ENCODE measurements at regions of chr1 and their contacts with region 1.

Region 1: GRCh38 chr1:3900119-3900968 is at the start of gene C1orf174:
- DNase-seq: peak; percentile 99
- H3K4me3 ChIP-seq: peak within 1 kb of the TSS; percentile 96
- H3K27ac ChIP-seq: peak within 1 kb of the TSS; percentile 100
- H3K4me1 ChIP-seq: peaks cover 54% of the 10 kb centered on the region
- CTCF ChIP-seq: no peak
- total RNA-seq, gene C1orf174: 43.4 and 59.5 TPM in 2 replicates

Region 2: GRCh38 chr1:3668585-3669300 is 231.6 kb before region 1 on chr1:
- CTCF ChIA-PET with region 1: no interaction called
- POLR2A ChIA-PET with region 1: no interaction called
- intact Hi-C with region 1: loop called (anchors 5 kb)
- DNase-seq: no peak
- H3K4me3 ChIP-seq: no peak overlapping the region
- H3K27ac ChIP-seq: no peak overlapping the region
- H3K4me1 ChIP-seq: peaks cover 49% of the 10 kb centered on the region
- CTCF ChIP-seq: no peak

Region 3: GRCh38 chr1:3772027-3772714 is 128.2 kb before region 1 on chr1:
- CTCF ChIA-PET with region 1: no interaction called
- POLR2A ChIA-PET with region 1: interaction called, 3 read pairs
- intact Hi-C with region 1: loop called (anchors 5 kb)
- DNase-seq: peak; percentile 91
- H3K4me3 ChIP-seq: peak overlapping the region; percentile 72
- H3K27ac ChIP-seq: no peak overlapping the region
- H3K4me1 ChIP-seq: peaks cover 22% of the 10 kb centered on the region
- CTCF ChIP-seq: no peak

Region 4: GRCh38 chr1:3796215-3797061 is 103.9 kb before region 1 on chr1 and contains the start of gene LRRC47:
- CTCF ChIA-PET with region 1: no interaction called
- POLR2A ChIA-PET with region 1: no interaction called
- intact Hi-C with region 1: loop called (anchors 2 kb)
- DNase-seq: peak; percentile 94
- H3K4me3 ChIP-seq: peak within 1 kb of the TSS; percentile 99
- H3K27ac ChIP-seq: peak within 1 kb of the TSS; percentile 32
- H3K4me1 ChIP-seq: peaks cover 24% of the 10 kb centered on the region
- CTCF ChIP-seq: no peak
- total RNA-seq, gene LRRC47: 34.0 and 36.4 TPM in 2 replicates

Region 5: GRCh38 chr1:3856908-3857790 is 43.2 kb before region 1 on chr1 and contains the starts of genes CEP104 and DFFB:
- CTCF ChIA-PET with region 1: interaction called, 7 read pairs
- POLR2A ChIA-PET with region 1: interaction called, 7 read pairs
- intact Hi-C with region 1: loop called (anchors 1 kb)
- DNase-seq: peak; percentile 99
- H3K4me3 ChIP-seq: peak within 1 kb of the TSS; percentile 87
- H3K27ac ChIP-seq: peak within 1 kb of the TSS; percentile 36
- H3K4me1 ChIP-seq: peaks cover 26% of the 10 kb centered on the region
- CTCF ChIP-seq: peak; percentile 69
- total RNA-seq, gene CEP104: 26.8 and 36.5 TPM in 2 replicates
- total RNA-seq, gene DFFB: 15.2 and 21.6 TPM in 2 replicates

Region 6: GRCh38 chr1:3942818-3943431 is 42.6 kb after region 1 on chr1:
- CTCF ChIA-PET with region 1: no interaction called
- POLR2A ChIA-PET with region 1: no interaction called
- intact Hi-C with region 1: no loop called
- DNase-seq: no peak
- H3K4me3 ChIP-seq: no peak overlapping the region
- H3K27ac ChIP-seq: no peak overlapping the region
- H3K4me1 ChIP-seq: no peaks in the 10 kb centered on the region
- CTCF ChIP-seq: no peak

Region 7: GRCh38 chr1:4494558-4494957 is 594.2 kb after region 1 on chr1:
- CTCF ChIA-PET with region 1: no interaction called
- POLR2A ChIA-PET with region 1: no interaction called
- intact Hi-C with region 1: no loop called
- DNase-seq: peak; percentile 37
- H3K4me3 ChIP-seq: no peak overlapping the region
- H3K27ac ChIP-seq: no peak overlapping the region
- H3K4me1 ChIP-seq: peaks cover 68% of the 10 kb centered on the region
- CTCF ChIP-seq: peak; percentile 45; the same call in 1 of the 2 replicates

Region 8: GRCh38 chr1:5223206-5223605 is 1322.9 kb after region 1 on chr1:
- CTCF ChIA-PET with region 1: no interaction called
- POLR2A ChIA-PET with region 1: no interaction called
- intact Hi-C with region 1: loop called (anchors 5 kb)
- DNase-seq: no peak
- H3K4me3 ChIP-seq: no peak overlapping the region
- H3K27ac ChIP-seq: peak overlapping the region; percentile 99
- H3K4me1 ChIP-seq: peaks cover 71% of the 10 kb centered on the region
- CTCF ChIP-seq: no peak

Measured in OCI-LY7 (cell line).